ENCODE measurements at regions of chr2 and their contacts with region 1.

Region 1: DNA sequence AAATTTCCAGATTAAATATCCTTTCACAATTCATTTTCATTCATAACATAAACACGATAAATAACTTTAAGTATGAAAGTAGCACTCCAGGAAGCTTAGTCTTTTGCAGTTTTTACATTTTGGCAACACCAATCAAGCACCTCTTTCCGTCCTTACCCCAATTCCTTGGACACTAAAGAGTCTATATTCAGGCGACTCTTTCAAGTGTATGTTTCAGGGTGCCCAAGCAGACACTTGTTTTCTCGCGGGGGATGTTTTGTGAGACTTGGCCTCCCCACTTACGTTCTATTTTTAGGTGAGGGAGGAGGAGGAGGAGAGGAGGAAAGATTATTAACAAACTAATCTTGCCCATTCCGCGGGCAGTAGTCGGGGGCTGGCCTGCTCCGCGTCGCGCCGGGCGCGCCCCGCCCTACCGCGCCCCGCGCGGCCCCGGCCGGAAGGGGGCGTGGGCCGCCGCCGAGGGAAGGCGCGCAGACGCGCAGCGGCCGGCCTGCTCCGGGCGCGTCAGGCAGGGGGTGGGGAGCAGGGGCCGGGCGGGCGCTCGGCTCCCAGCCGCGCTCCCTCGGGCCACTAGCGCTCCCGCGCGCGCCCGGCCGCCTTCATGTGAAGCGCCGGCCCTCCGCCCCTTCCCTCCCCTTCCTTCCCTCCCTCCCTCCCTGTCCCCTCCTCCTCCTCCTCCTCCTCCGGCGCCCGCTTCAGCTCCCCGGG is at the start of gene ITPRID2:
- DNase-seq: peak; percentile 47 to 84 (median 70)
- H3K4me3 ChIP-seq: peak within 1 kb of the TSS; percentile 62 to 96 (median 87)
- H3K27ac ChIP-seq: peak within 1 kb of the TSS; percentile 73 to 99 (median 96)
- H3K27me3 ChIP-seq: no peaks in the 10 kb centered on the region
- CTCF ChIP-seq: peak in 24 of 56 donors; percentile 11 to 55 (median 31)
- total RNA-seq, gene ITPRID2: 109 to 304 (median 180) TPM

Region 2: DNA sequence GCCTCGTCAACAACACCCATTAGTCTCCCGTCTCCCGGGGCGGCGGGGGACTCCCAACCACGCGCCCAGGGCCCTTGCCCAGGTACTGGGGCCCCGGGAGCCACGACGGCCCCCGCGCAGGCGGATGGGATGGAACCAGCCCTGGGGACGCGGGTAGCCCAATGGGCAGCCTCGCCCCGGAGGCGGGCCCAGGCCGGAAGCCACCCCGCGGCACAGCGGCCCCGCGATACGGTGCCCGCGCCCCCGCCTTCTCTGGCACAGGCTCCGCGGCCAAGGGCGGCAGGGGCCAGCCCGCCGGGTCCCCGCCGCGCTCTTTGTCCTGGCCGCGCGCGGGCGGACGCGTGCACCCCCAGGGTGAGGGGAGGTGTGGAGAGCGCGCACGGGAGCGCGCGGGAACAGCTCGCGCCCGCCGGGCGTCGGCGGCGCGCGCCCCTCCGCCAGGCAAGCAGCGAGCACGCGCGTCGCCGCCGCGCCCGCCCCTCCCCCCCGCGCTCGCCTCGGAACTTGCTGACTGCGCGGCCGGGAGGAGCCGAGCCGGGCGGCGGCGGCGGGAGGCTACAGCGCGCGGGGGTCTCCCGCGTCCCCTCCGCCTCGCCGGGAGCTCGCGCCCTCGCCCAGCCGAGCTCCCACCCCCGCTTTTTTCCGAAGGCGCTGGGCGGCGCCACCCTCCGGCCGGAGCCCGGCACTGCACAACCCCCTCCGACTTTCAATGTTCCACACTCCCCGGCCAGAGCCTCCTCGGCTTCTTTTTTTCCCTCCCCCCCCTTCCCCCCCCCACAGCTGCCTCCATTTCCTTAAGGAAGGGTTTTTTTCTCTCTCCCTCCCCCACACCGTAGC is 911.1 kb before region 1 on chr2 and contains the start of gene UBE2E3:
- intact Hi-C with region 1: loop called in 1 of 2 experiments (anchors 5 kb)
- DNase-seq: peak; percentile 64 to 89 (median 74)
- H3K4me3 ChIP-seq: peak within 1 kb of the TSS; percentile 66 to 95 (median 78)
- H3K27ac ChIP-seq: peak within 1 kb of the TSS; percentile 84 to 99 (median 96)
- H3K27me3 ChIP-seq: no peaks in the 10 kb centered on the region
- CTCF ChIP-seq: peak in 55 of 56 donors; percentile 10 to 72 (median 51)
- total RNA-seq, gene UBE2E3: 57.4 to 131 (median 85.6) TPM

Region 3: GRCh38 chr2:181742922-181743722 is 148.3 kb before region 1 on chr2:
- intact Hi-C with region 1: loop called in 1 of 2 experiments (anchors 5 kb)
- DNase-seq: peak in 3 of 10 donors; percentile 4 to 42 (median 6)
- H3K4me3 ChIP-seq: peak overlapping the region in 12 of 59 donors; percentile 0 to 42 (median 12)
- H3K27ac ChIP-seq: no peak overlapping the region
- H3K27me3 ChIP-seq: no peaks in the 10 kb centered on the region
- CTCF ChIP-seq: peak; percentile 51 to 90 (median 74)

Region 4: DNA sequence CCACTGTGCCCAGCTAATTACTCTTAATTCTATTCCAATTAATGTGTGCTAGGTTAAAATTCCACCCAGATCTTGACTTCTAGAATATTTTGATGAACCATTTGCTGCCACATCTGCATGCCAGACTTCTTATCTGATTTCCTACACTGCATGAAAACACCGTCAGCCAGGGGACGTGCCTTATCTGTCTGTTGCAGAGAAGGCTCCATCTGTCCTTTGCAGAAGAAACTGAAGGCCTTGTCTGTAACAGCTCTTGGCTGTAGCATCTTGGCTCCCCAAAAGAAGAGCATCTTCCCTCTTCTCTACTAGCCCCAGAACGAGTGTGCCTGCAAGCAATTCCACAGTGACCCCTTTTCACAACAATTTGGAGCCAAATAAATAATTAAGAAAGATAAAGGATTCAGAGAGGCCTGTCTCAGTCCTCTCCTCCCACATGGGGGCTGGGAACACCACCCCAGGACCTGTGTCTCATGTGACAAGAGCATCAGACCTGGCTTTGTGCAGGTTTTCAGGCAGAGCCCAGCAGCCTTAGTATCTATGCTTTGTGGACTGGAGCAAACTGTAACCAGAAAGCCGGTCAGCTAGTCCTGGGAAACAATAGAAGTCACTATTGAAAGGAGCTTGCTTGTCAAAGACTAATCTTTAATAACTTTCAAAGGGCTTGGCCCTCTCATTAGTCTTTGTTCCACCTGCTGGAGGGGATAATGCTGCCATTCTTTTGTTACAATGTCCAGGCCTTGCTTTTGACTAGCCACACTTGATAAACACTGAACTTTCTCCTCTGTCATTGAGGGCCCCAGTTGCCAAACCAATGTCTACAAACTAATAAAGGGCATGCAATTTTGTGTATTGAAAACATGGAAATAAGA is 127.1 kb before region 1 on chr2:
- intact Hi-C with region 1: loop called in 1 of 2 experiments (anchors 5 kb)
- DNase-seq: no peak
- H3K4me3 ChIP-seq: no peak overlapping the region
- H3K27ac ChIP-seq: no peak overlapping the region
- H3K27me3 ChIP-seq: no peaks in the 10 kb centered on the region
- CTCF ChIP-seq: no peak

Region 5: DNA sequence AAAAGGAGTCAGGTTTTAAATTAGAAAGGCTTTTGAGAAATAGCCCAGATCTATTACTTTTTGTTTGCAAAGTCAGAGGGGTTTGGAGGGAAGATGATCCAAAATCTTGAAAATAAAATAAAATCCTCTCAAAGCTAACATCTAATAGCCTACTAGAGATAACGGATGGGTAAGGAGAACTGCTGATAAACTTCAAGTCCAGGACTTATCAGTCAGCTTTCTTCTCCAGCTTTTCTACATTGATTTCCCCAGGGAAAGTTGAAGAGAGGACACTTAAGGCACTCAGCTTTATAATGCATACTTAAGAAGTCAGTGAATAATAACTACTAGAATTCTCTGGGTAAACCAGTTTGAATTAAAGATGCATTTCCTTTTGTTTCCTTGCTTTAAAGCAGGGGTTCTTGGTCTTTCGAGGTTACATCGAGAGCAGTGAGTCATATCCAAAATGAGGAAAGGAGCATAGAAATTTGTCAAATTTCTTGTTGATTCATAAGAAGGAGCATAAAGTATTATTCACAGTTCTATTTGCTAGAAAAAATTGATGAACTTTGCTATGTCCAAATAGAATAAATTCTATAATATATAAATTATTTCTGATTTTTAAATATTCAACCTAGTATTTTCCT is 43.0 kb before region 1 on chr2:
- intact Hi-C with region 1: loop called in 1 of 2 experiments (anchors 5 kb)
- DNase-seq: no peak
- H3K4me3 ChIP-seq: peak overlapping the region in 1 of 59 donors; percentile 20
- H3K27ac ChIP-seq: peak overlapping the region in 37 of 59 donors; percentile 1 to 91 (median 48)
- H3K27me3 ChIP-seq: no peaks in the 10 kb centered on the region
- CTCF ChIP-seq: no peak

Region 6: GRCh38 chr2:181984814-181985631 is 93.6 kb after region 1 on chr2:
- intact Hi-C with region 1: loop called in 1 of 2 experiments (anchors 5 kb)
- DNase-seq: no peak
- H3K4me3 ChIP-seq: peak overlapping the region in 21 of 59 donors; percentile 1 to 51 (median 23)
- H3K27ac ChIP-seq: peak overlapping the region in 2 of 59 donors; percentile 32 to 58
- H3K27me3 ChIP-seq: peaks cover 0 to 24% (median 0%) of the 10 kb centered on the region in 45 donors
- CTCF ChIP-seq: no peak

Region 7: DNA sequence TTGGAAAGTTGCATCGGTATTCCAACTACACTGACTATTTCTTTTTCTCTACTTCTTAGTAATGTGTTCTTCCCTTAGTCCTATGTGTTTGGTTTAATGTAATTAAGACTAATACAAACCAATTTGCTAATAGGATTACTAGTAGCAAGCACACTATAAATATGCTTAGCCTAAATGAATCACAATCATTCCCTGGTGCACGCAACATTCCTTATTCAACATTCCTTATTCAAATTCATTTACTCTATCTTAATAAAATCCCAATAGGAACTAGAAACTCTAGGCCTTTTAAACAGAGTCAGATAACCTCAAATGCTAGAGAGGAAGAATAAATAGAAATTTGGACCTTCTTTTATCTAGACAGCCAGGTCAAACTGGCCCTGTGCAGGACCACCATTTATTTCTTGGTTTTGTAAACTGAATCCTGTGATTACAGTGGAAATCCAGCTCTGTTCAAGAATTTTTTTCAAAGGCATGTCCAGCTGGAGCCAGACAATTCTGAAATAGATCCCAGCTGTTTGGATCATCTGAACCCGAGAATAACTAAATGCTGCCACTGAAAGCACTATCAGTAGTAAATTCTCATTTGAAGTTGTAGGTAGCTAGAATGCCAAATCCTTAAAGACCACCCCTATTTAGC is 197.4 kb after region 1 on chr2:
- intact Hi-C with region 1: loop called in 1 of 2 experiments (anchors 10 kb)
- DNase-seq: no peak
- H3K4me3 ChIP-seq: no peak overlapping the region
- H3K27ac ChIP-seq: no peak overlapping the region
- H3K27me3 ChIP-seq: peaks cover 0 to 7% (median 0%) of the 10 kb centered on the region in 45 donors
- CTCF ChIP-seq: no peak

Region 8: DNA sequence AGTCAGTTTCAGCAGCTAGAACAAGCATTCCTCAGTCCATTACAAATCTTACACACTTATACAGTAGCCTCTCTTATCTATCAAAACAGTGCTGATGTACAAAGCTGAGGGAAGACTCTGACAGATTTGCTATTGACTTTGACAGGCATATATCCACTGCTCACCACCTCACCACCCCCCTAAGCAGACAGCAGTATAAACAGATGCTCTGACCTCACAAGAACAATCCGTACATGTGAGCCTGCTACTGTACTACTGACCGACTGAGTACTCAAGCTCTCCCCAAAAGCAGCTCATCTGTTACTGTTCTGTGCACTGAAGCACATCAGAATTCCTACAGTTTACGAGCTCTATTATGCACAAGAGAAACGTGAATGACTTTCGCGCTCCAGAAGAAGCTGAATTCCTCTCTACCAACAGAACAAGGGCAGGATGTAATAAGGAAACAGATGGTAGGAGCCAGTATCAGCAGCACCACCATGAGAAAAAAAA is 631.0 kb after region 1 on chr2:
- intact Hi-C with region 1: no loop called
- DNase-seq: peak in 2 of 10 donors; percentile 32 to 57
- H3K4me3 ChIP-seq: peak overlapping the region; percentile 2 to 72 (median 54)
- H3K27ac ChIP-seq: peak overlapping the region in 57 of 59 donors; percentile 19 to 88 (median 79)
- H3K27me3 ChIP-seq: no peaks in the 10 kb centered on the region
- CTCF ChIP-seq: no peak

Region 9: DNA sequence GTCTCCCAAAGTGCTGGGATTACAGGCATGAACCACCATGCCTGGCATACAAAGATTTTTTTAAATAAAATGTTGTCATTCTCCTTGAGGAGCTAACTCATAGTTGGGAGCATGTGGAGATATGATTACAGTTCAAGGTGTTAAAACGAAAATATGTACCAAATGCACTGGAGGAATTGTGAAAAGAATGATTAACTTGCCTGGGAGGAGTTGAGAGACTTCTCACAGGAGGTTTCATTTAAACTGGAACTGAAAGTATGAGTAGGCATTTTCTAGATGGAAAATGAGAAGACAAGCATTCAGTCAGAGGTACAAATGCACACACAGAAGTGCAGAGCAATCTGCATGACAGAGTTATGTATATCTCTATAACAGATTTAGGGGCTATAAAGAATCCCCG is 662.1 kb after region 1 on chr2:
- intact Hi-C with region 1: no loop called
- DNase-seq: no peak
- H3K4me3 ChIP-seq: no peak overlapping the region
- H3K27ac ChIP-seq: peak overlapping the region in 56 of 59 donors; percentile 52 to 99 (median 94)
- H3K27me3 ChIP-seq: no peaks in the 10 kb centered on the region
- CTCF ChIP-seq: no peak

Measured in dorsolateral prefrontal cortex (tissue), 120 donors.